Activated CD4-positive, alpha-beta T cell treated with anti-CD3 and anti-CD28 coated beads, Interleukin-2, amount 10 ng/mL, durations not matched to agents 24 days and 14 days (primary cell): ENCODE measurements at regions of chr10 and their contacts with region 1.

Region 1: DNA sequence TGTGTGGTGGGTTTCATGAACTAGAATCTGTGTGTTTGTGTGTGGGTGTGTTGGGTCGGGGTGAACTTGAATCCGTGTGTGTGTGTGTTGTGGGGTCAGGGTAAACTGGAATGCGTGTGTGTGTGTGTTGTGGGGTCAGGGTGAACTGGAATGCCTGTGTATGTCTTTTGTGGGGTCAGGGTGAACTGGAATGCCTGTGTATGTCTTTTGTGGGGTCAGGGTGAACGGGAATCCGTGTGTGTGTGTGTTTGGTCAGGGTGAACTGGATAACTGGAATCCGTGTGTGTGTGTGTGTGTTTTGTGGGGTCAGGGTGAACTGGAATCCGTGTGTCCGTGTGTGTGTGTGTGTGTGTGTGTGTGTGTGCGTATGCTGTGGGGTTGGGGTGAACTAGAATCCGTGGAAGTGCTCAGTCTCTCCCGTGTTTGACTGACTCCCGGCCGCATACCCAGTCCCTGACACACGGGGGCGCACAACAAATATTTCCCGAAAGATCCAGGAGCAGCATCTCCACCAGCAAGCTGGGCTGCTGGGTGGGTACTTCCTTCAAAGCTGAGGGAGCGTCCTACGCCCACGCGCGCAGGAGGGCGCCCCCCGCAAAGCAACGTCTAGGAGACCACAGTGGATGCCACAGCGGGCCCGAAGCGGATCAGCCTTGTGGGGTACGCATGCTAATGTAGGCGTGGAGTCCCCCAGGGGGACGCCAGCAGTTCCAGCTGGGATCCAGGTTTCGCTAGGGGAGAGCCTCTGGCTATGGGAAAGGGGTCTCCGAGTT is 836 bp upstream of the CASP7 start:
- DNase-seq: peak; percentile 92
- H3K4me3 Mint-ChIP-seq: peak overlapping the region; percentile 89
- H3K27ac Mint-ChIP-seq: peak overlapping the region; percentile 89
- H3K4me1 Mint-ChIP-seq: peaks cover 37% of the 10 kb centered on the region
- H3K27me3 Mint-ChIP-seq: peaks cover 9% of the 10 kb centered on the region

Region 2: GRCh38 chr10:113666682-113667252 is 12.1 kb before region 1 on chr10:
- intact Hi-C with region 1: no loop called
- DNase-seq: peak; percentile 67
- H3K4me3 Mint-ChIP-seq: peak overlapping the region; percentile 15
- H3K27ac Mint-ChIP-seq: peak overlapping the region; percentile 72
- H3K4me1 Mint-ChIP-seq: peaks cover 16% of the 10 kb centered on the region
- H3K27me3 Mint-ChIP-seq: peaks cover 15% of the 10 kb centered on the region

Region 3: DNA sequence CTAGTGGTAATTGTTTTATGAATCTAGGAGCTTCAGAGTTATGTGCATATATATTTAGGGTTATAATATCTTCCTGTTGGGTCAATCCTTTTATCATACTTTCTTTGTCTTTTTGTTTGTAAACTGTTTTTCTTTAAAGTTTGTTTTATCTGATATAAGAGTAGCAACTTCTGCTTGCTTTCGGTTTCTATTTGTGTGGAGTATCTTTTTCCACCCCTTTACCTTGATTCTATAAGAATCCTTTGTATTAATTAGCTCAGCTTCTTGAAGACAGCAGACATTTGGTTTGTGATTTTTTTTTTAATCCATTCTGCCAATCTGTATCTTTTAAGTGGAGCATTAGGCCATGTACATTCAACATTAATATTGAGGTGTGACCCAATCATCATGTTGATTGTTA is 10.2 kb after region 1 on chr10:
- intact Hi-C with region 1: loop called (anchors 1 kb)
- DNase-seq: no peak
- H3K4me3 Mint-ChIP-seq: peak overlapping the region; percentile 66
- H3K27ac Mint-ChIP-seq: peak overlapping the region; percentile 52
- H3K4me1 Mint-ChIP-seq: peaks cover 31% of the 10 kb centered on the region
- H3K27me3 Mint-ChIP-seq: no peaks in the 10 kb centered on the region

Region 4: GRCh38 chr10:113704637-113705343 is 25.9 kb after region 1 on chr10:
- intact Hi-C with region 1: loop called (anchors 2 kb)
- DNase-seq: peak; percentile 74
- H3K4me3 Mint-ChIP-seq: no peak overlapping the region
- H3K27ac Mint-ChIP-seq: no peak overlapping the region
- H3K4me1 Mint-ChIP-seq: peaks cover 26% of the 10 kb centered on the region
- H3K27me3 Mint-ChIP-seq: no peaks in the 10 kb centered on the region

Region 5: DNA sequence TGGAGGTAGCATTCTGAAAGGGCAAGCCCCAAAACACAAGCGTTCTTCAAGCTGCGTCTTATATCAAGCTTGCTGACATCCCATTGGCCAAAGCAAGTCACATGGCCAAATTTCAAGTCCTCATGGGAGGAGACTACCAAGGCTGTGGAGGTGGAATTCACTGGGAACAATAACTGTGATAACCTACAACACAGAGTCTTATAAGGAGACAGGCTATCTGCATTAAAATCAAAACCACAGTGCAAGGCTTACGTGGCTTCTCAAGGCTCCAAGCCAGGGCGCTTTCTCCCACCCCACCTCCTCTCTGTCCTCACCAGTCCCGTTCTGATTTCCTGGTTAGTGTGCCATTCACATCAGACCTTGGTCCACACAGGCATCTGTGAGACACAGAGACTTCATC is 404.2 kb after region 1 on chr10:
- intact Hi-C with region 1: loop called (anchors 5 kb)
- DNase-seq: peak; percentile 73
- H3K4me3 Mint-ChIP-seq: no peak overlapping the region
- H3K27ac Mint-ChIP-seq: no peak overlapping the region
- H3K4me1 Mint-ChIP-seq: no peaks in the 10 kb centered on the region
- H3K27me3 Mint-ChIP-seq: peaks cover 24% of the 10 kb centered on the region